AG04450 (cell line): ENCODE measurements at regions of chr5 and their contacts with region 1.

Region 1: GRCh38 chr5:172764849-172765765 is 5.9 kb downstream of the DUSP1 start:
- DNase-seq: peak; percentile 97
- H3K4me3 ChIP-seq: peak overlapping the region; percentile 100
- H3K27ac ChIP-seq: peak overlapping the region; percentile 65
- H3K27me3 ChIP-seq: no peaks in the 10 kb centered on the region
- CTCF ChIP-seq: no peak

Region 2: DNA sequence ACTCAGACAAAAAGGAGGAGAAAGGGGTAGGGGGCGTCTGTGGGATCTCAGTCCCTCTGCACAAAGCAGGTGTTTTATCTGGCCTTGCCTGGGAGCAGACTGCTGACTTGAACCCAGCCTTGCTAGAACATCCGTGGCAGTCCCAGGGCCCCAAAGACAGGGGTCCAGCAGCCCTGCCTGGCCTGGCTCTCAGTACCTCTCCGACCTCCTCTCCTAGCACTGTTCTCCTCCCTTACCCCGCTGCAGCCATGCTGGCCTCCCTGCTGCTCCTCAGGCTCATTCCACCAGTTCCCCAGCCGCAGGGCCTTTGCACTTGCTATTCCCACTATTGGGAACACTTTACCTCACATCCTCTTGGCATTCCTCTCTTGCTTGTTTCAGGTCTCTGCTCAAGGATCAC is 39.3 kb before region 1 on chr5:
- CTCF ChIA-PET with region 1: interaction called, 20 read pairs
- POLR2A ChIA-PET with region 1: interaction called, 3 read pairs
- DNase-seq: no peak
- H3K4me3 ChIP-seq: no peak overlapping the region
- H3K27ac ChIP-seq: no peak overlapping the region
- H3K27me3 ChIP-seq: peaks cover 4% of the 10 kb centered on the region
- CTCF ChIP-seq: no peak

Region 3: DNA sequence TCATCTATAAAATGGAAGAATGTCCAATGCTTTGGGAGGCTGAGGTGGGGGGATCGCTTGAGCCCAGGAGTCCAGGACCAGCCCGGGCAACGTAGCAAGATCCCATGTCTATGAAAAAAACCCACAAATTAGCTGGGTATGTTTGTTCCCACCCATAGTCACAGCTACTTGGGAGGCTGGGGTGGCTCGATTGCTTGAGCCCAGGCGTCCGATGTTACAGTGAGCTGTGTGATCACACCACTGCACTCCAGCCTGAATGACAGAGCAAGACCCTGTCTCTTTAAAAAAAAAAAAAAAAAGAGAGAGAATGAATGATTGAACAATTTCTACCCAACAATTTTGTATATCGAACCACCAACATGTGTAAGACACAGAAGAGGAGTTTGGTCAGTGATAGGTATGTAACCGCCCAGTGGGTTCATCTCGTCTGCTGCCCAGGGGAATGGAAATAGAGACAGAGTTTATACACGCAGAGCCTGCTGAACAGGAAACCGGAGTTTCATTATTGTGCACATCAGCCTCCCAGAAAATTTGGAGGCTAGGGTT is 42.7 kb after region 1 on chr5:
- CTCF ChIA-PET with region 1: no interaction called
- POLR2A ChIA-PET with region 1: no interaction called
- DNase-seq: no peak
- H3K4me3 ChIP-seq: no peak overlapping the region
- H3K27ac ChIP-seq: peak overlapping the region; percentile 65
- H3K27me3 ChIP-seq: no peaks in the 10 kb centered on the region
- CTCF ChIP-seq: no peak

Region 4: GRCh38 chr5:172897481-172898217 is 132.5 kb after region 1 on chr5:
- CTCF ChIA-PET with region 1: no interaction called
- POLR2A ChIA-PET with region 1: interaction called, 15 read pairs
- DNase-seq: peak; percentile 83
- H3K4me3 ChIP-seq: no peak overlapping the region
- H3K27ac ChIP-seq: peak overlapping the region; percentile 99
- H3K27me3 ChIP-seq: no peaks in the 10 kb centered on the region
- CTCF ChIP-seq: no peak